ENCODE measurements at regions of chr4 and their contacts with region 1.

Region 1: GRCh38 chr4:106502106-106502699 is 133.6 kb upstream of the GIMD1 start:
- DNase-seq: peak; percentile 66
- H3K4me3 ChIP-seq: no peak overlapping the region
- H3K27ac ChIP-seq: no peak overlapping the region
- H3K4me1 ChIP-seq: no peaks in the 10 kb centered on the region
- H3K27me3 ChIP-seq: no peaks in the 10 kb centered on the region
- CTCF ChIP-seq: peak; percentile 69 to 72
- POLR2A ChIP-seq: no peak

Region 2: GRCh38 chr4:106315968-106316772 is 186.0 kb before region 1 on chr4 and contains the starts of genes AIMP1 and TBCK:
- CTCF ChIA-PET with region 1: no interaction called
- POLR2A ChIA-PET with region 1: no interaction called
- dilution Hi-C with region 1: no loop called
- intact Hi-C with region 1: loop called (anchors 1 kb)
- DNase-seq: peak; percentile 92
- H3K4me3 ChIP-seq: peak within 1 kb of the TSS; percentile 49 to 96 (median 83)
- H3K27ac ChIP-seq: peak within 1 kb of the TSS; percentile 92
- H3K4me1 ChIP-seq: peaks cover 20% of the 10 kb centered on the region
- H3K27me3 ChIP-seq: no peaks in the 10 kb centered on the region
- CTCF ChIP-seq: no peak
- POLR2A ChIP-seq: peak; percentile 78
- total RNA-seq, gene AIMP1: 42.4 and 44.7 TPM in 2 replicates
- total RNA-seq, gene TBCK: 29.0 and 38.6 TPM in 2 replicates

Region 3: GRCh38 chr4:106512706-106513105 is 10.5 kb after region 1 on chr4:
- CTCF ChIA-PET with region 1: interaction called, 10 read pairs
- POLR2A ChIA-PET with region 1: no interaction called
- dilution Hi-C with region 1: no loop called
- intact Hi-C with region 1: no loop called
- DNase-seq: no peak
- H3K4me3 ChIP-seq: no peak overlapping the region
- H3K27ac ChIP-seq: no peak overlapping the region
- H3K4me1 ChIP-seq: no peaks in the 10 kb centered on the region
- H3K27me3 ChIP-seq: no peaks in the 10 kb centered on the region
- CTCF ChIP-seq: no peak
- POLR2A ChIP-seq: no peak

Region 4: DNA sequence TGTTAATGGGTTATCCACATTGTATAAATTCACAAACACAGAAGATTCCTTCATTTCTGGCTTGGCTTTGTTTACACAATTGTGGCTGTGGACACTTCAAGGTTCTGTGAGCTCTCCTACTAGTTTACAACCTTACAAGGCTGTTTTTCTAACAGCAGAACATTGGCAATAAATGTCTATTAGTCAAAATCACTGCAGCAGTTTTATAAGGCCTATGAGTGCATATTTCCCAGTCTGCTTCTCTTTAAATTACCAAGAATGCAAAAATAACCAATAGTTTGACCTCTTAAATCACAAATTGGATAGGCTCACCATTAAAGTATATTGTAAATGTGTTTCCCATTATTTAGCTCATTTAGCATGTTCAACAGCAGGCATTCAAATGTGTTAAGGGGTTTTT is 294.7 kb after region 1 on chr4:
- CTCF ChIA-PET with region 1: no interaction called
- POLR2A ChIA-PET with region 1: no interaction called
- dilution Hi-C with region 1: no loop called
- intact Hi-C with region 1: no loop called
- DNase-seq: no peak
- H3K4me3 ChIP-seq: no peak overlapping the region
- H3K27ac ChIP-seq: no peak overlapping the region
- H3K4me1 ChIP-seq: no peaks in the 10 kb centered on the region
- H3K27me3 ChIP-seq: no peaks in the 10 kb centered on the region
- CTCF ChIP-seq: no peak
- POLR2A ChIP-seq: no peak

Region 5: DNA sequence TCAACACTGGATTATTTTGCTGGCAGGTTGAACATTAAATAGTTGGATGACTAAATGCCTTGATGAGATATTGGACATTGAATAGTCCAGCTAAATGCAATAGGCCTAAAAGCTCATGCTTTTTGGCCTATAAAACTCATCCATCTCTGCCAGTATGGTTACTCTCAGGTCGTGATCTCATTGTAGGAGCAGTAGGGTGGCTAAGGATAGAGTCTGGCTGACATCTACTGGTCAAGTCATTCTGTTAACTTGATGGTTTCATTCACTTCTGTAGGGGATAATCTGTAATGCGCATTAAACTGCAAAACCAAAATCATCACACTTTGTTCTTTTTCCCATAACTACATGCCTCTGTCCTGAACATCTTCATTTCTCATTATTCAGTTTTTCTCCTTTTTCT is 306.9 kb after region 1 on chr4:
- CTCF ChIA-PET with region 1: interaction called, 4 read pairs
- POLR2A ChIA-PET with region 1: no interaction called
- dilution Hi-C with region 1: no loop called
- intact Hi-C with region 1: loop called (anchors 1 kb)
- DNase-seq: peak; percentile 66
- H3K4me3 ChIP-seq: no peak overlapping the region
- H3K27ac ChIP-seq: no peak overlapping the region
- H3K4me1 ChIP-seq: no peaks in the 10 kb centered on the region
- H3K27me3 ChIP-seq: no peaks in the 10 kb centered on the region
- CTCF ChIP-seq: peak; percentile 27 to 30
- POLR2A ChIP-seq: no peak

Region 6: GRCh38 chr4:106898621-106899230 is 396.5 kb after region 1 on chr4:
- CTCF ChIA-PET with region 1: interaction called, 4 read pairs
- POLR2A ChIA-PET with region 1: no interaction called
- dilution Hi-C with region 1: no loop called
- intact Hi-C with region 1: loop called (anchors 2 kb)
- DNase-seq: peak; percentile 61
- H3K4me3 ChIP-seq: no peak overlapping the region
- H3K27ac ChIP-seq: no peak overlapping the region
- H3K4me1 ChIP-seq: no peaks in the 10 kb centered on the region
- H3K27me3 ChIP-seq: no peaks in the 10 kb centered on the region
- CTCF ChIP-seq: peak; percentile 65 to 69
- POLR2A ChIP-seq: no peak